ENCODE measurements at regions of chr15 and their contacts with region 1.

Region 1: GRCh38 chr15:92881802-92882696 is 18.1 kb upstream of the CHD2 start:
- DNase-seq: peak; percentile 99
- ATAC-seq: peak; percentile 90
- H3K4me3 ChIP-seq: peak overlapping the region; percentile 43 to 77 (median 56)
- H3K4me3 Mint-ChIP-seq: peak overlapping the region; percentile 93
- H3K27ac ChIP-seq: peak overlapping the region; percentile 88 to 89
- H3K27ac Mint-ChIP-seq: peak overlapping the region; percentile 99
- H3K4me1 ChIP-seq: peaks cover 28 to 36% of the 10 kb centered on the region in 2 donors
- H3K4me1 Mint-ChIP-seq: peaks cover 41% of the 10 kb centered on the region
- H3K27me3 ChIP-seq: no peaks in the 10 kb centered on the region
- H3K27me3 Mint-ChIP-seq: no peaks in the 10 kb centered on the region
- CTCF ChIP-seq: no peak

Region 2: GRCh38 chr15:92521624-92522008 is 360.4 kb before region 1 on chr15:
- CTCF ChIA-PET with region 1: no interaction called
- POLR2A ChIA-PET with region 1: no interaction called
- intact Hi-C with region 1: no loop called
- DNase-seq: peak; percentile 18
- ATAC-seq: no peak
- H3K4me3 ChIP-seq: no peak overlapping the region
- H3K4me3 Mint-ChIP-seq: no peak overlapping the region
- H3K27ac ChIP-seq: no peak overlapping the region
- H3K27ac Mint-ChIP-seq: no peak overlapping the region
- H3K4me1 ChIP-seq: no peaks in the 10 kb centered on the region
- H3K4me1 Mint-ChIP-seq: no peaks in the 10 kb centered on the region
- H3K27me3 ChIP-seq: no peaks in the 10 kb centered on the region
- H3K27me3 Mint-ChIP-seq: no peaks in the 10 kb centered on the region
- CTCF ChIP-seq: peak; percentile 36

Region 3: GRCh38 chr15:92714477-92715401 is 167.3 kb before region 1 on chr15:
- CTCF ChIA-PET with region 1: no interaction called
- POLR2A ChIA-PET with region 1: no interaction called
- intact Hi-C with region 1: no loop called
- DNase-seq: peak; percentile 79
- ATAC-seq: peak; percentile 73
- H3K4me3 ChIP-seq: peak overlapping the region; percentile 30 to 71 (median 47)
- H3K4me3 Mint-ChIP-seq: peak overlapping the region; percentile 83
- H3K27ac ChIP-seq: no peak overlapping the region
- H3K27ac Mint-ChIP-seq: no peak overlapping the region
- H3K4me1 ChIP-seq: peaks cover 11 to 12% of the 10 kb centered on the region in 2 donors
- H3K4me1 Mint-ChIP-seq: peaks cover 11% of the 10 kb centered on the region
- H3K27me3 ChIP-seq: peaks cover 0 to 23% (median 10%) of the 10 kb centered on the region in 4 experiments
- H3K27me3 Mint-ChIP-seq: peaks cover 42% of the 10 kb centered on the region
- CTCF ChIP-seq: peak; percentile 95

Region 4: DNA sequence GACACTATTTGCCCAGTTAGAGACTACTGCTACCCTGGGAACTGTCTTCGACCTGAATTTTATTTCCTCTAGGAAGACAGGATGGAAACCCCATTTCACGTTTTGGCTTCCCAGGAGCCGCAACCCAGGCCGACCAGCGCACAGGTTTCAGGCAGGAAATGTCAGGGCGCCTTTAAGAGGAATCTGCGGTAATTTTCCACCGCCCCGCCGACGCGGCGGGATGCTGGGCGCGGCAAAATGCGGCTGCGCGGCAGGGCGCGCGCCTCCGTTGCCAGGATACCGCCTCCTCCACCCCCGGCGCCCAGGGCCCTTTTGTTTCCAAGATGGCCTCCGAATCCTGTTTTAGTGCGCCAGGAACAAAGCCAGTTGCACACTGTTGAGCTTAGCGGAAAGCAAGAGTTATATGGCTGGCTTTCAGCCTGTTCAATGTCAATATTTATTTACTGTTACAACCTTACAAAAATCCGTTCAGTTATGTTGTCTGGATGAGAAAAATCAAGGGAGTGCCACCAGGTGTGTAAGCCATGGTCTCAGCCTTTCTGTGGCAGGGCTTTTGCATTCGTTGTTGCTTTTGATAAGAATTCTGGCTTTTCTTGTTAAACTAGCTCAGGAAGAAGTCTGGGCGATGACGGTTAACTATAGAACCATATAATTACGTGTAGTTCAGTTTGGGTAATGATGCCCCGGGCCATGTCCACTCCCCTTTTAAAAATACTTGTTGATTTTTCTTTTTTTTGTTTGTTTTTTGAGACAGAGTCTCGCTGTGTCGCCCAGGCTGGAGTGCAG is 61.6 kb before region 1 on chr15:
- CTCF ChIA-PET with region 1: interaction called, 9 read pairs
- POLR2A ChIA-PET with region 1: interaction called, 34 read pairs
- intact Hi-C with region 1: loop called (anchors 1 kb)
- DNase-seq: peak; percentile 90
- ATAC-seq: peak; percentile 80
- H3K4me3 ChIP-seq: peak overlapping the region; percentile 58 to 92 (median 75)
- H3K4me3 Mint-ChIP-seq: peak overlapping the region; percentile 90
- H3K27ac ChIP-seq: peak overlapping the region; percentile 82 to 83
- H3K27ac Mint-ChIP-seq: peak overlapping the region; percentile 95
- H3K4me1 ChIP-seq: peaks cover 25 to 49% of the 10 kb centered on the region in 2 donors
- H3K4me1 Mint-ChIP-seq: peaks cover 60% of the 10 kb centered on the region
- H3K27me3 ChIP-seq: no peaks in the 10 kb centered on the region
- H3K27me3 Mint-ChIP-seq: no peaks in the 10 kb centered on the region
- CTCF ChIP-seq: no peak

Region 5: DNA sequence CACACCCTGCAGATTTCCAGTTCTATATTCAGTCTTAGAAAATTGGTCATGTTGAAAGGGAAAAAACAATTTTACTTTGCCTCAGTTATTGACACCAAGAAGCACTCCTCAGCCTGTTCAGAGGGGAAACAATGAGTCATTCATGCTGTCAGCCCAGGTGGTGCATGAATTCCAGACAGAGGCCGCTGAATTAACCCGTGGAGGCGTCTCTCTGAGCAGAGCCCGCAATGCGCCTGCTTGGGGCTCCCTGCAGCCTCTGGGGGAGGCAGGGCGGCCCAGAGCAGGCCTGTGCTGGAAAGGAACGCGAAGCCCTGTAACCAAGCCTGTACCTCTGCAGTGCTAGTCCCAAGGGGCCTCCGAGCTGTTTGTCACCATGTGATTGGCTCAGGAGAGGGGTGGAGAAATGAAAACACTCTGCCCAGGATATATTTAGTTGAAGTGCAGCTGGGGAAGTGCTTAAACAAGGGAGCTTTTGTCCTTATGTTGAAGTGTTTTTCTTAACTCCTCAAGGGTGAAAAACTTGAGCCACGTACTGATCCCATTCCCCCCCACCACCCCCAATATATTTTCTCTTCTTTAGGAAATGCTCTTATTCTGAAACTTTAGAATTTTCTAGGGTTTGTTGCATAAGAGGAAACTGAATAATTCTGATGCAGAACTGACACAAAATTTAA is 50.3 kb before region 1 on chr15:
- CTCF ChIA-PET with region 1: interaction called, 50 read pairs
- POLR2A ChIA-PET with region 1: interaction called, 169 read pairs
- intact Hi-C with region 1: loop called (anchors 1 kb)
- DNase-seq: peak; percentile 95
- ATAC-seq: peak; percentile 93
- H3K4me3 ChIP-seq: peak overlapping the region; percentile 23 to 65 (median 45)
- H3K4me3 Mint-ChIP-seq: peak overlapping the region; percentile 85
- H3K27ac ChIP-seq: peak overlapping the region; percentile 85 to 95
- H3K27ac Mint-ChIP-seq: peak overlapping the region; percentile 97
- H3K4me1 ChIP-seq: peaks cover 57 to 62% of the 10 kb centered on the region in 2 donors
- H3K4me1 Mint-ChIP-seq: peaks cover 50% of the 10 kb centered on the region
- H3K27me3 ChIP-seq: no peaks in the 10 kb centered on the region
- H3K27me3 Mint-ChIP-seq: no peaks in the 10 kb centered on the region
- CTCF ChIP-seq: no peak

Region 6: GRCh38 chr15:92845126-92845508 is 36.9 kb before region 1 on chr15:
- CTCF ChIA-PET with region 1: interaction called, 10 read pairs
- POLR2A ChIA-PET with region 1: interaction called, 58 read pairs
- intact Hi-C with region 1: loop called (anchors 1 kb)
- DNase-seq: peak; percentile 83
- ATAC-seq: peak; percentile 52
- H3K4me3 ChIP-seq: peak overlapping the region in 4 of 5 experiments; percentile 32 to 51 (median 38)
- H3K4me3 Mint-ChIP-seq: peak overlapping the region; percentile 83
- H3K27ac ChIP-seq: peak overlapping the region; percentile 74 to 79
- H3K27ac Mint-ChIP-seq: peak overlapping the region; percentile 96
- H3K4me1 ChIP-seq: peaks cover 61 to 70% of the 10 kb centered on the region in 2 donors
- H3K4me1 Mint-ChIP-seq: peaks cover 67% of the 10 kb centered on the region
- H3K27me3 ChIP-seq: no peaks in the 10 kb centered on the region
- H3K27me3 Mint-ChIP-seq: no peaks in the 10 kb centered on the region
- CTCF ChIP-seq: no peak

Region 7: DNA sequence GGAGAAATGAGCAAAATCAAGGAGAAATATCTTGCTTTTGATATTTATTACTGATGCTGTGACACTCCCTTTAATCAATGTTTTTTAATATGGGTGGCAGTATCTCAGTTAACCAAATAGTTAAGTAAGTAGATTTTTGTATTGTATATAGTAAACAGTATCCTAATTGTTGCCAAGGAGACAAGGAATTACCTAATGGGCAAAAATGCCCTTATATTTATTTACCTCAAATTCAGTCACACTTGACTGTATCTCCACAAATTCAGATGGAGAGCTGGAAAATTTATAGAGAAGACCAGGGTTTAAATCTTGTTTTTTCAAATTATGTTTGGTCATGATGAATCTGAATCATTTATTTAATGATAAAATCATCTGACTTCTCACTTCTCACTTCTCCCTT is 14.5 kb after region 1 on chr15:
- CTCF ChIA-PET with region 1: interaction called, 28 read pairs
- POLR2A ChIA-PET with region 1: interaction called, 117 read pairs
- intact Hi-C with region 1: loop called (anchors 1 kb)
- DNase-seq: no peak
- ATAC-seq: no peak
- H3K4me3 ChIP-seq: no peak overlapping the region
- H3K4me3 Mint-ChIP-seq: no peak overlapping the region
- H3K27ac ChIP-seq: peak overlapping the region; percentile 23 to 80
- H3K27ac Mint-ChIP-seq: peak overlapping the region; percentile 2
- H3K4me1 ChIP-seq: peaks cover 6 to 29% of the 10 kb centered on the region in 2 donors
- H3K4me1 Mint-ChIP-seq: peaks cover 41% of the 10 kb centered on the region
- H3K27me3 ChIP-seq: no peaks in the 10 kb centered on the region
- H3K27me3 Mint-ChIP-seq: no peaks in the 10 kb centered on the region
- CTCF ChIP-seq: no peak

Region 8: GRCh38 chr15:92903941-92904831 is 22.1 kb after region 1 on chr15:
- CTCF ChIA-PET with region 1: interaction called, 28 read pairs
- POLR2A ChIA-PET with region 1: interaction called, 117 read pairs
- intact Hi-C with region 1: loop called (anchors 1 kb)
- DNase-seq: peak; percentile 99
- ATAC-seq: peak; percentile 82
- H3K4me3 ChIP-seq: peak overlapping the region; percentile 64 to 100 (median 85)
- H3K4me3 Mint-ChIP-seq: peak overlapping the region; percentile 92
- H3K27ac ChIP-seq: peak overlapping the region; percentile 95 to 97
- H3K27ac Mint-ChIP-seq: peak overlapping the region; percentile 100
- H3K4me1 ChIP-seq: peaks cover 48 to 57% of the 10 kb centered on the region in 2 donors
- H3K4me1 Mint-ChIP-seq: peaks cover 64% of the 10 kb centered on the region
- H3K27me3 ChIP-seq: no peaks in the 10 kb centered on the region
- H3K27me3 Mint-ChIP-seq: no peaks in the 10 kb centered on the region
- CTCF ChIP-seq: no peak

Region 9: DNA sequence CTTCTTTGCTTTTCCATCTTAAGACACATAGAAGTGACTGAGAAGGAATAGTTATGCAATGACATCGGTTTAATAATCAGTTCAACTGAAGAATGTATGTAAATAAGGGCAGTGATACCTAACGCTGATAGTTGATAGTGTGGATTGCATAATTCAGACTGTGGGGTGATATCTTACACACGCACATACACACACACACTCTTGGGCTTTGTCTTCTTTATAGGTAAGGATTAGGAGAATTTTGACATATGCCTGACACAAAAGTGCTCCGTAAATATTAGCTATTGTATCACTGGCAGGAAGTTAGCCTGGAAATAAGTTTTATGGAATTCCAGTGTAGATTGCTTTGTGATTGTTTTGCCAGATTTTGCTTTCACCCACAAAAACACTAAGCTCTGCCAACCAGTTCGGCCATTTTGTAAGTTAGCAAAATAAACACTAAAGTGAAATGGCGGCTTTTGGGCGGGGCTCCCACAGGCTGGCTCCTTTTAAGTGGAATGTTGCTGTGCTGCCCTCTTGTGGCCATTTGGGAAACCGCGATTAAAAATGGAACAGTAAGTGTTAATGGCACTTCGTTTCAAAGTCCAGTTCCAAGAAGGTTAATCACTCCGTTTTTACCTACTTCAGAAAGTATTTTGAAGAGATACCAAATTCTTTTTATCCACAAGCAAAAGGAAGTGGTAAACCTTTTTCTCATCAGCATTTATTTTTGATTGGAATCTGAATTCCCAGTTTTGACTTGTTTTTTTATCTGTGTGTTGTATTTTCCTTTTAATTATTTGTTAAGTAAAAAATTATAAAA is 35.8 kb after region 1 on chr15:
- CTCF ChIA-PET with region 1: interaction called, 45 read pairs
- POLR2A ChIA-PET with region 1: interaction called, 44 read pairs
- intact Hi-C with region 1: loop called (anchors 1 kb)
- DNase-seq: peak; percentile 94
- ATAC-seq: peak; percentile 44
- H3K4me3 ChIP-seq: peak overlapping the region in 1 of 5 experiments; percentile 8
- H3K4me3 Mint-ChIP-seq: peak overlapping the region; percentile 74
- H3K27ac ChIP-seq: peak overlapping the region; percentile 83 to 93
- H3K27ac Mint-ChIP-seq: peak overlapping the region; percentile 93
- H3K4me1 ChIP-seq: peaks cover 73 to 77% of the 10 kb centered on the region in 2 donors
- H3K4me1 Mint-ChIP-seq: peaks cover 80% of the 10 kb centered on the region
- H3K27me3 ChIP-seq: no peaks in the 10 kb centered on the region
- H3K27me3 Mint-ChIP-seq: no peaks in the 10 kb centered on the region
- CTCF ChIP-seq: peak; percentile 95

Measured in B cell (primary cell).